Ascending aorta (tissue), 2 donors: ENCODE measurements at regions of chr16 and their contacts with region 1.

Region 1: DNA sequence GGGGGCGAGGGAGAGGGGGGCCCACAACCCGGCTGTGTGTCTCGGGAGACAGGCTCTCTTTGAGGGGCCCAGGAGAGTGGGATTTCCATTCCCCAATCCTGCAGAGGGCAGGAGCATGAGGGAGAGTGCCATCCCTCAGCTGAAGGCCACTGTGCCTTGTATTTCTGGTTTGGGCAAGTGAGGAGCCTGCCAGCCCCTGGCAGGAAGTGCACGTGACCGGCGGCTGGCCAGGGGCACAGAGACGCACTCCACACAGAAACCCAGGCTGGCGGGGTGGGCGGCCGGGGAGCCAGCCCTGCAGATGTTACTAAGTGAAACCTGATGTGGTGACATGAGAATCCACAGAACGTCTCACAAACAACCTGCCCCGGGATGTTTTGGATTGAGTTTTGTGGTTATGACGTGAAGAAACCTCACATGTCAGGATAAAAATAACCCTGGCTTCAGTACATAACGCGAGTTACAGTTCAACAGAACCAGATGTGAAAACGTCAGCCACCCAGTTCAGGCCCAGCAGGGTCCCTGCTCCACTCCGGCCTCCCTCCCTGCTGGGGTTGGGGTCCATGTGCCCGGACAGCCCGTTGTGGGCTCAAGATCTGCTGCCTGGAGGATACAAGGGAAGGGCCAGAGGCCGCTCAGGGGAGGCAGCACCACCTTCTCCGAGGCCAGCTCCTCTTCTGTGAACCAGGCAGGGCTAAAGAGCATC is 51.7 kb upstream of the MTSS2 start:
- DNase-seq: peak; percentile 45 to 85
- H3K4me3 ChIP-seq: no peak overlapping the region
- H3K27ac ChIP-seq: peak overlapping the region; percentile 90 to 91
- H3K4me1 ChIP-seq: peaks cover 14 to 32% of the 10 kb centered on the region in 2 donors
- H3K27me3 ChIP-seq: no peaks in the 10 kb centered on the region
- CTCF ChIP-seq: no peak

Region 2: GRCh38 chr16:70679666-70680494 is 57.6 kb before region 1 on chr16:
- intact Hi-C with region 1: loop called (anchors 1 kb)
- DNase-seq: no peak
- H3K4me3 ChIP-seq: no peak overlapping the region
- H3K27ac ChIP-seq: peak overlapping the region; percentile 74 to 84
- H3K4me1 ChIP-seq: peaks cover 18 to 46% of the 10 kb centered on the region in 2 donors
- H3K27me3 ChIP-seq: no peaks in the 10 kb centered on the region
- CTCF ChIP-seq: peak; percentile 26 to 85 (median 41)

Region 3: DNA sequence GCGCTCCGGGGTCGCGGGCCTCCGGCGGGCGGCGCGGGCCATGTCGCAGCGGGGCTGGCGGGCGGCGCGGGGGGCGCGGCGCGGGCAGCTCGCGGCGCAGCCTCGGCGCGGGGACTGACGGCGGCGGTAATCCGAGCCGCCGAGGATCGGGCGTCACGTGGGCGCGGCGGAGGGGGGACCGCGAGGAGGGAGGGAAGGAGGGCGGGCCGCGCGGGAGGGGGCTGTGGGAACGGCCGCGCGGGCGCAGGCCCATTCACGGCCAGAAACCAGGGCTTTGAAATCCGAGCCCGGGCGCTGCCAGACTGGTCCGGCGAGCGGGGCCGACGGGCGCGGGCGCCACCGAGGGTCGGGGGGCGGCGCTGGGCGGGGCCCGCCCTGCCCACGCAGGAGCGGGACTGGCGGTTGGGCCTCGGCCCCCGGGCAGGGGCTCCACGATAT is 51.6 kb before region 1 on chr16 and contains the start of gene MTSS2:
- intact Hi-C with region 1: loop called (anchors 2 kb)
- DNase-seq: peak in 1 of 2 donors; percentile 90
- H3K4me3 ChIP-seq: peak within 1 kb of the TSS; percentile 89 to 91
- H3K27ac ChIP-seq: peak within 1 kb of the TSS; percentile 96 to 97
- H3K4me1 ChIP-seq: peaks cover 36 to 84% of the 10 kb centered on the region in 2 donors
- H3K27me3 ChIP-seq: no peaks in the 10 kb centered on the region
- CTCF ChIP-seq: no peak
- total RNA-seq, gene MTSS2: 98.6 TPM

Region 4: GRCh38 chr16:70703041-70703834 is 34.3 kb before region 1 on chr16:
- intact Hi-C with region 1: loop called (anchors 5 kb)
- DNase-seq: peak; percentile 80 to 93
- H3K4me3 ChIP-seq: no peak overlapping the region
- H3K27ac ChIP-seq: peak overlapping the region; percentile 91 to 96
- H3K4me1 ChIP-seq: peaks cover 33 to 69% of the 10 kb centered on the region in 2 donors
- H3K27me3 ChIP-seq: no peaks in the 10 kb centered on the region
- CTCF ChIP-seq: peak; percentile 43 to 70 (median 52)